ENCODE measurements at regions of chr7 and their contacts with region 1.

Region 1: DNA sequence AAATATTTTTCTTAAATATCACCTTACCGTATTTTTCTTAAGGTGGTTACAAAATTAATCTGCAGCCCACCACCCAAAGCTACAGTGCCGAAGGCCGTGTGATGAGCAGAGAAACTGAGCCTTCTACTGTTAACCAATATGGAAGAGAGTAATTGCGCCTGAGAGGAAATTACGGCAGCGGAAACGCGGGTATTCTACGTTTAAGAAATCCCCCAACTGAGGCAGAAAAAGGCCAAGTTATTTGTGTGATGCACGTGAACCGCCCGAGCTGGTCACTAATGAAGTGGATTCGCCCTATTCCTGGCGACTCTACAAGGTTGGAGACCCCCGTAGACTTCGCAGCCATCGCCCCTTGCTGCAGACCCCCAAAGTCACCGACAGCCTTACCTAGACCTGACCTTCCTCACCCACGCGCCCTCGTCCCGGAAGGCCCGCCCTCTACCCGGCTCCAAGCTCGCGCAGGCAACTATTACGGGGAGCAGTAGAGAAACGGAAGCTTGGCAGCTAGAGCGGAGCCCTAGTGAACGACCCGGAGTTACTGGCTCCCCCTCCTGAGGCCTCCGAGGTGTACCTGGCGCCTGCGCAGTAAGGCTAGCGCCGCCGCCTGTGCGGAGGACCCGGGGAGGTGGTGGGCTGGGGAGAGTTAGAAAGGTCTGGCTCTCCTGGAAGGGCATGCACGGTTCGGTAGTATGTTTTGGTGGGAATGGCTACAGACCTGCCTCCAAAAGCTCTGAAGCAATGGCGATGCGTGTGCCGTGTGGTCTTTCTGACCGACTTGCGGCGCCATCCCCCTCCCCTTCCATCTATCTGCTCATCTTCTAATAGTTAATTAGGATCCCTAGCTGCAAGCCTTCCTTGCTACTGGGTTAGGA is at the start of gene MRPS33:
- DNase-seq: peak; percentile 88 to 98 (median 94)
- ATAC-seq: peak; percentile 96
- H3K4me3 ChIP-seq: peak within 1 kb of the TSS; percentile 71 to 80
- H3K4me3 Mint-ChIP-seq: peak within 1 kb of the TSS; percentile 100
- H3K27ac ChIP-seq: peak within 1 kb of the TSS; percentile 96 to 100
- H3K27ac Mint-ChIP-seq: peak within 1 kb of the TSS; percentile 100
- H3K4me1 ChIP-seq: peaks cover 17% of the 10 kb centered on the region
- H3K4me1 Mint-ChIP-seq: peaks cover 32% of the 10 kb centered on the region
- H3K27me3 ChIP-seq: no peaks in the 10 kb centered on the region
- H3K27me3 Mint-ChIP-seq: peaks cover 12% of the 10 kb centered on the region
- CTCF ChIP-seq: peak; percentile 45
- total RNA-seq, gene MRPS33: 17.4 to 19.9 TPM

Region 2: DNA sequence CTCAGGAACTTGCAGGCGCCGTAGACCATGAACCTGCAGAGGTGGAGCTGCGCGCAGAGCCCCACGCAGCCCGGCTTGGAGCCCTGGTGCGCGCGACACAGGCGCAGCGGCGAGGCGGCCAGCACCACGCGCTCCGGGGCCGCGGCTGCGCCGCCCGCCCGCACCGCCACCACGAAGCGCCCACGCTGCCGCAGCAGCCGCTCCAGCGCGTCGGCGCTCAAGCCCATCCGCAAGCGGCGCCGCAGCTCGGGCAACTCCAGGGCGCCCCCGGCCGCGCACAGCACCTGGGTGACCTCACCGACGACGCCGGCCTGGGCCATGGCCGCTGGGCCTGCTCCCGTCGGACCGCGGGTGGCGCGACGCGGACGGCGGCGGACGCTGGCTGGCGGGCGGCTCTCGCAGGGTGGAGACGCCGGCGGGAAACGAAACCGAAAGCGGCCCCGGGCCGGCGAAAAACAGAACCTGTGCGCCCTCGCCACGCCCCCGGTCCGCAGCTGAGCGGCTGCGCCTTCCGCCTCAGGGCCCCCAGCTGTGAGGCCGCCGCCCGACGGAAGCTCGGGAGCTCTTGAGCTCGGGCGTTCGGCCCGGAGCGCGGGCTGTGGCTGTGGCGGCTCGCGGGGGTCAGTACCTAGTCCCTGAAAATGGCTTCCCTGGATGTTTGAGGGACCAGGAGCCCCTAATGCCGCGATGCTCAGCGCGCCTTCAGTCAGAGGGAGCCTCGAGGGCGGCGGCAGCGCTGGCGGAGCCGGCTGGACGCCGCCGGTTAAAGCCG is 952.0 kb before region 1 on chr7 and contains the start of gene PARP12:
- CTCF ChIA-PET with region 1: no interaction called
- POLR2A ChIA-PET with region 1: no interaction called
- intact Hi-C with region 1: loop called in 1 of 2 experiments (anchors 5 kb)
- DNase-seq: peak; percentile 78 to 94 (median 87)
- ATAC-seq: peak; percentile 76
- H3K4me3 ChIP-seq: peak within 1 kb of the TSS; percentile 68 to 86
- H3K4me3 Mint-ChIP-seq: peak within 1 kb of the TSS; percentile 95
- H3K27ac ChIP-seq: peak within 1 kb of the TSS; percentile 82
- H3K27ac Mint-ChIP-seq: peak within 1 kb of the TSS; percentile 94
- H3K4me1 ChIP-seq: peaks cover 34% of the 10 kb centered on the region
- H3K4me1 Mint-ChIP-seq: peaks cover 42% of the 10 kb centered on the region
- H3K27me3 ChIP-seq: no peaks in the 10 kb centered on the region
- H3K27me3 Mint-ChIP-seq: no peaks in the 10 kb centered on the region
- CTCF ChIP-seq: no peak
- total RNA-seq, gene PARP12: 70.3 to 85.5 TPM

Region 3: GRCh38 chr7:140479062-140479738 is 535.6 kb before region 1 on chr7 and contains the start of gene MKRN1:
- CTCF ChIA-PET with region 1: interaction called, 4 read pairs
- POLR2A ChIA-PET with region 1: interaction called, 10 read pairs
- intact Hi-C with region 1: loop called (anchors 1 to 2 kb)
- DNase-seq: peak; percentile 83 to 95 (median 93)
- ATAC-seq: peak; percentile 84
- H3K4me3 ChIP-seq: peak within 1 kb of the TSS; percentile 82 to 85
- H3K4me3 Mint-ChIP-seq: peak within 1 kb of the TSS; percentile 99
- H3K27ac ChIP-seq: peak within 1 kb of the TSS; percentile 69 to 81
- H3K27ac Mint-ChIP-seq: peak within 1 kb of the TSS; percentile 99
- H3K4me1 ChIP-seq: peaks cover 33% of the 10 kb centered on the region
- H3K4me1 Mint-ChIP-seq: peaks cover 27% of the 10 kb centered on the region
- H3K27me3 ChIP-seq: no peaks in the 10 kb centered on the region
- H3K27me3 Mint-ChIP-seq: no peaks in the 10 kb centered on the region
- CTCF ChIP-seq: no peak
- total RNA-seq, gene MKRN1: 146 to 148 TPM

Region 4: GRCh38 chr7:140673063-140673773 is 341.5 kb before region 1 on chr7:
- CTCF ChIA-PET with region 1: interaction called, 3 read pairs
- POLR2A ChIA-PET with region 1: interaction called, 3 read pairs
- intact Hi-C with region 1: loop called (anchors 2 to 5 kb)
- DNase-seq: peak; percentile 30 to 79 (median 65)
- ATAC-seq: peak; percentile 77
- H3K4me3 ChIP-seq: peak overlapping the region; percentile 56 to 64
- H3K4me3 Mint-ChIP-seq: peak overlapping the region; percentile 88
- H3K27ac ChIP-seq: peak overlapping the region; percentile 68 to 80
- H3K27ac Mint-ChIP-seq: peak overlapping the region; percentile 93
- H3K4me1 ChIP-seq: peaks cover 22% of the 10 kb centered on the region
- H3K4me1 Mint-ChIP-seq: peaks cover 41% of the 10 kb centered on the region
- H3K27me3 ChIP-seq: no peaks in the 10 kb centered on the region
- H3K27me3 Mint-ChIP-seq: no peaks in the 10 kb centered on the region
- CTCF ChIP-seq: no peak

Region 5: DNA sequence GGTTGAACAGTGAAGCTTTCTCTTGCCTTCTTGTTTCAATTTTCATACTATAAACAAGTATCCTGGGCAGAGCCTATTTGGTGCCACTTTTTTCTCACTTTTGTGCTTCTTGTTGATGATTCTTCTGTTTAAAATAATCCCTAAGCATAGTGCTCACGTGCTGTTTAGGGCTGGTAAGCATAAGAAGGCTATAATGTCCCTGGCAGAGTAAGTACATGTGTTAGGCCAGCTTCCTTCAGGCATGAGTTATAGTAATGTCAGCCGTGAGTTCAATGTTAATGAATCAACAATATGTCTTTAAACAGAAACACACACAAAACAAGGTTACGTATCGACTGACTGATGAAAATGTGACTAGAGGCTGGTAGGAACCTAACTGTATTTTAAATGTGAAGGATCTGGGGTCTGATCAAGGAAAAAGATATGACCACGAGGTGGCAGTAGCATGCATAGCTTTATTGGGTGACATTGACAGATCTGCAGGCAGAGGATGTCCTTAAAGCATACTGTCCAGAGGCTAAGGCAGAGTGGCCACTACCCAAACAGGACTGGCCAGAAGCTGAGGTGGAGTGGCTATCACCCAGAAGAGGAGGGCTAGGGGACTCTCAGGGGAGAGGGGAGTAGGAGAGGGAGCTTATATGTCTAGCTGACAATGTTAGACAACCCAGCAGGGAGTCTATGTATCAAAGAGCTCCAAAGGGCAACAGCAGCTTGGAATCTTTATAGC is 203.8 kb before region 1 on chr7:
- CTCF ChIA-PET with region 1: interaction called, 165 read pairs
- POLR2A ChIA-PET with region 1: interaction called, 21 read pairs
- intact Hi-C with region 1: loop called (anchors 1 kb)
- DNase-seq: peak; percentile 17 to 82 (median 61)
- ATAC-seq: peak; percentile 72
- H3K4me3 ChIP-seq: no peak overlapping the region
- H3K4me3 Mint-ChIP-seq: no peak overlapping the region
- H3K27ac ChIP-seq: no peak overlapping the region
- H3K27ac Mint-ChIP-seq: no peak overlapping the region
- H3K4me1 ChIP-seq: no peaks in the 10 kb centered on the region
- H3K4me1 Mint-ChIP-seq: peaks cover 4% of the 10 kb centered on the region
- H3K27me3 ChIP-seq: no peaks in the 10 kb centered on the region
- H3K27me3 Mint-ChIP-seq: no peaks in the 10 kb centered on the region
- CTCF ChIP-seq: peak; percentile 76

Region 6: GRCh38 chr7:141144921-141145629 is 130.3 kb after region 1 on chr7:
- CTCF ChIA-PET with region 1: no interaction called
- POLR2A ChIA-PET with region 1: no interaction called
- intact Hi-C with region 1: no loop called
- DNase-seq: no peak
- ATAC-seq: no peak
- H3K4me3 ChIP-seq: no peak overlapping the region
- H3K4me3 Mint-ChIP-seq: no peak overlapping the region
- H3K27ac ChIP-seq: no peak overlapping the region
- H3K27ac Mint-ChIP-seq: no peak overlapping the region
- H3K4me1 ChIP-seq: no peaks in the 10 kb centered on the region
- H3K4me1 Mint-ChIP-seq: no peaks in the 10 kb centered on the region
- H3K27me3 ChIP-seq: peaks cover 0 to 2% of the 10 kb centered on the region in 2 experiments
- H3K27me3 Mint-ChIP-seq: no peaks in the 10 kb centered on the region
- CTCF ChIP-seq: no peak

Region 7: DNA sequence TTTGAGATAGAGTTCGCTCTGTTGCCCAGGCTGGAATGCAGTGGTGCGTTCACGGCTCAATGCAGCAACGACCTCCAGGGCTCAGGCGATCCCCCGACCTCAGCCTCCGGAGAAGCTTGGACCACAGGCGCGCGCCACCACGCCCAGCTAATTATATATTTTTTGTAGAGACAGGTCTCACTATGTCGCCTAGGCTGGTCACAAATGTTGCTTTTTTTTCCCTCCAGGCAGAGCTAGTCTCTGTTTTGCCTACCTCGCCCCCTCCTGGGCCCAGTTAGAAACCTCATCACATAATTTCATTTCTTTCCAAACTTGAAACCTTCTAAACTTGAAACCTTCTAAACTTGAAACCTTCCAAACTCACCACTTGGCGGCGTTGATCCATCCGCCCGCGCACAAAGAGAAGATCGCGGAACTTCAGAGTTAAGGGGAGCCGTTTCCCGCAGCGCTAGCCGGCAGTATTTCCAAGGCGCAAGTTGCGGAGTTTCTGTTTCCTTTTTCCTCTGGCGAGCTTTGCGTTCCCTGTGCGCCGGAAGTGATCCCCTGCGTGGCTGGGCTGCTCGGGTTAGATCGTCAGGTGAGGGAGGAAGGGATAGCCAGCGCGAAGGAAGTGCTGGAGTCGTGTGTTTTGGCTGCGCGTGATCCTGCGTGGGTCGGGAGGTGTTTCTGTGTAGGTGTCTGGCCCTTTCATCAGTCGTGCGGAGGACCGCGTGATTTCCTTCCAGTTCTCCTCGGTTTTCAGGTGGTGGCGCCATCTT is 723.3 kb after region 1 on chr7 and contains the start of gene SSBP1:
- CTCF ChIA-PET with region 1: interaction called, 4 read pairs
- POLR2A ChIA-PET with region 1: interaction called, 9 read pairs
- intact Hi-C with region 1: loop called in 1 of 2 experiments (anchors 1 kb)
- DNase-seq: peak; percentile 84 to 98 (median 90)
- ATAC-seq: peak; percentile 84
- H3K4me3 ChIP-seq: peak within 1 kb of the TSS; percentile 63 to 83
- H3K4me3 Mint-ChIP-seq: peak within 1 kb of the TSS; percentile 99
- H3K27ac ChIP-seq: peak within 1 kb of the TSS; percentile 77 to 81
- H3K27ac Mint-ChIP-seq: peak within 1 kb of the TSS; percentile 99
- H3K4me1 ChIP-seq: peaks cover 30% of the 10 kb centered on the region
- H3K4me1 Mint-ChIP-seq: peaks cover 45% of the 10 kb centered on the region
- H3K27me3 ChIP-seq: no peaks in the 10 kb centered on the region
- H3K27me3 Mint-ChIP-seq: no peaks in the 10 kb centered on the region
- CTCF ChIP-seq: peak; percentile 85
- total RNA-seq, gene SSBP1: 107 TPM